ENCODE measurements at regions of chr1 and their contacts with region 1.

Region 1: DNA sequence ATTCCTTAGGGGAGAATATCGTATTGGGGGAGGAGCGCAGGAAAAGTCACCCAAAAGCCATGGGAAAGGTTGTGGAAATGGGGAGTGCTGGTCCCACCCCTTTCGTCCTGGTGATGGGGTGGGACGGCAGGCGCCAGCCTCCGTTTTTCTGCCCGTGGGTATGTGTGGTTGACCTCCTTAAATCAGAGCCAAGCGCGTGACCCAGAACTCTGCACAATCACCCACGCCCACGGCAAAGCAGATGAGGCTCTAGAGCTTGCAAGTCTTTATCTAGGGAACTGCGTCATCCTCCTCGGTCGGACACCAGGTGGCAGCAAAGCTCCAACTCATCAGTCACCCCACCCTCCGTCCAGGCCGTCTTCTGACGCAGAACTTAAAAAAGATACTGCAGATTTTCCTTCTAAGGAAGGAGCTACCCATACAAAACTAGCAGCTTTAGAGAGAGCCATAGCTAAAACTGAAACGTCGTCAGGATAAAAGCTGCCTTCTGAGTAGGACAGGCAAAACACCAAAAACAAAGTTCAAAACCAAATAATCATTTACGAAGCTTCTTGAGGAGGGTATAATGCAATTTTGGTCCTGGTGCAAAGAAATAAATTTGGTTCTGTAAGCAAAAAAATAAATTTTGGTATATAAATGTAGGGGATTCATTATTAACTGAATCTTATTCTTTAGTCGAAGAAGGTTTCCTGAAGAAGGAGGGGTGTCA is 62.0 kb downstream of the TBX19 start:
- DNase-seq: peak; percentile 66 to 90 (median 86)
- ATAC-seq: peak; percentile 100
- H3K4me3 ChIP-seq: peak overlapping the region; percentile 30
- H3K4me3 Mint-ChIP-seq: peak overlapping the region in 9 of 10 donors; percentile 5 to 66 (median 57)
- H3K27ac ChIP-seq: peak overlapping the region; percentile 12
- H3K27ac Mint-ChIP-seq: peak overlapping the region; percentile 80 to 96 (median 90)
- H3K4me1 ChIP-seq: peaks cover 0 to 33% of the 10 kb centered on the region in 2 donors
- H3K4me1 Mint-ChIP-seq: peaks cover 13 to 55% (median 31%) of the 10 kb centered on the region in 7 donors
- H3K27me3 ChIP-seq: no peaks in the 10 kb centered on the region
- H3K27me3 Mint-ChIP-seq: no peaks in the 10 kb centered on the region

Region 2: DNA sequence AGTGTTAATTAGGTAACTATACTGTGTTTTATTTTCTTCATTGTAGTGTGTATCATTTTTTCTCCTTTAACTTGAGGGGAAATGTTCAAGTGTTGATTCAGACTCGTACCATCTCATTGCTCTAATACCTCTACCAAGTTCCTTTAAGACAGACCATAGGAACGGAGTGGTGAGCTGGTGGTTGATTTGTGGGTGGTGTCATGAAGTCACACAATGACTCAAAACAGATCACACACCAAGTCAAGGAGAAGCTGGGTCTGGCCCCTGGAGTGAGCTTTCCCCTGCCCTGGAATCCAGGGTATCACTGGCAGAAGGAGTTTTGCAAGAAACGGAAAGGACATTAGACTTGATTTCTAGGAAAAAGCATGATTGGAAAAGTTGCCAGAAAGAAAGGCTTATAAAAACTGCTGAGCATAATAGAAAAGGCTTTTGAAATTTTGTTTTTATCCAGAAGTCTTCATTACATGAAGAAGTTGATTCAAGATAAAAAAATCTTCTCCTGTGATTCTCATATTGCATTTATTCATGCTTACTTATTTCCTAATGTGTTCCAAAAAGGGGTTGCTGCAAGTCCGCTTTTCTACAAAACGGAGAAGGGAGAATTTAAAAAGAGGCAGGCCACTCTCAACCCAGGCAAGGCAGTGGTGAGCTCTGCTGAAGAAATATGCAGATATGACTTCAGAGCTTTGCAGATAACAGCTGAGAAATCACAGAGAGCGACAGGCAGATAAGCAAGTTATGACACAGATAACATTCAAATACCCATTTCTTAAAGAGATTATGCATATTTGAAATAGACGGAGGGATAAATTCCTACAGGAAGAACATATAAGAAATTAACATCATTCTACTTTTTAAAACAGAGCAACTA is 17.7 kb after region 1 on chr1:
- CTCF ChIA-PET with region 1: interaction called, 68 read pairs
- POLR2A ChIA-PET with region 1: interaction called, 4 read pairs
- intact Hi-C with region 1: loop called (anchors 1 kb)
- DNase-seq: peak in 1 of 9 donors; percentile 51
- ATAC-seq: no peak
- H3K4me3 ChIP-seq: no peak overlapping the region
- H3K4me3 Mint-ChIP-seq: peak overlapping the region in 1 of 10 donors; percentile 49
- H3K27ac ChIP-seq: no peak overlapping the region
- H3K27ac Mint-ChIP-seq: peak overlapping the region in 2 of 9 donors; percentile 35 to 70
- H3K4me1 ChIP-seq: peaks cover 4 to 37% of the 10 kb centered on the region in 2 donors
- H3K4me1 Mint-ChIP-seq: peaks cover 8 to 45% (median 10%) of the 10 kb centered on the region in 7 donors
- H3K27me3 ChIP-seq: no peaks in the 10 kb centered on the region
- H3K27me3 Mint-ChIP-seq: peaks cover 0 to 12% (median 5%) of the 10 kb centered on the region in 5 donors

Region 3: DNA sequence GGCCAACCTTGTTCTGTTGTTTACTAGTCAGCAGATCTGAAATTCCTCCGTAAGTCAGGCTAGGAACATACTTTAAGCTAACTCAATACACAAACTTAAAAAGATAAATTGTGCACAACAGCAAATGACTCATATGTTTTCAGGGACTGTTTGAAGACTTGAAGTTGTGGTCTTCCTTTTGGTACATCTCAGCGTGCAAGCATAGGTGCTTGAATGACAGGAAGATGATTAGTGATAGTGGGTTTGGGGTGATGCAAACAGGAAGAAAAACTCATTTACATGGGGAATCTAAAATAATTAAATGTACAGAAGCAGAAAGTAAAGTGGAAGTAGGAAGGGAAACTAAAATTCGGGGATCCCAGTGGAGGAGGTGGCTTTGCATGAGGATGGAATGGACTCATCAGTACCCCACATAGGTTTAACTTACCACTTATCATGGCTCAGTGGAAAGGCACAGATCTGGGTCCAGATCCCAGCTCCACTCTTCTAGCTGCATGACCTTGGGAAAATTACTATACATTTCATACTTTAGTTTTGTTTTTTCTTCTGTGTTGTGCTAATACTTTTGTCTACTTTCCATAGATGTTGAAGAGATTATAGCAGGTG is 78.8 kb after region 1 on chr1:
- CTCF ChIA-PET with region 1: interaction called, 3 read pairs
- POLR2A ChIA-PET with region 1: no interaction called
- intact Hi-C with region 1: loop called in 1 of 2 experiments (anchors 5 kb)
- DNase-seq: no peak
- ATAC-seq: peak; percentile 81
- H3K4me3 ChIP-seq: no peak overlapping the region
- H3K4me3 Mint-ChIP-seq: peak overlapping the region in 2 of 10 donors; percentile 48 to 54
- H3K27ac ChIP-seq: no peak overlapping the region
- H3K27ac Mint-ChIP-seq: peak overlapping the region in 5 of 9 donors; percentile 14 to 75 (median 23)
- H3K4me1 ChIP-seq: peaks cover 0 to 38% of the 10 kb centered on the region in 2 donors
- H3K4me1 Mint-ChIP-seq: peaks cover 5 to 24% (median 7%) of the 10 kb centered on the region in 7 donors
- H3K27me3 ChIP-seq: no peaks in the 10 kb centered on the region
- H3K27me3 Mint-ChIP-seq: no peaks in the 10 kb centered on the region

Region 4: DNA sequence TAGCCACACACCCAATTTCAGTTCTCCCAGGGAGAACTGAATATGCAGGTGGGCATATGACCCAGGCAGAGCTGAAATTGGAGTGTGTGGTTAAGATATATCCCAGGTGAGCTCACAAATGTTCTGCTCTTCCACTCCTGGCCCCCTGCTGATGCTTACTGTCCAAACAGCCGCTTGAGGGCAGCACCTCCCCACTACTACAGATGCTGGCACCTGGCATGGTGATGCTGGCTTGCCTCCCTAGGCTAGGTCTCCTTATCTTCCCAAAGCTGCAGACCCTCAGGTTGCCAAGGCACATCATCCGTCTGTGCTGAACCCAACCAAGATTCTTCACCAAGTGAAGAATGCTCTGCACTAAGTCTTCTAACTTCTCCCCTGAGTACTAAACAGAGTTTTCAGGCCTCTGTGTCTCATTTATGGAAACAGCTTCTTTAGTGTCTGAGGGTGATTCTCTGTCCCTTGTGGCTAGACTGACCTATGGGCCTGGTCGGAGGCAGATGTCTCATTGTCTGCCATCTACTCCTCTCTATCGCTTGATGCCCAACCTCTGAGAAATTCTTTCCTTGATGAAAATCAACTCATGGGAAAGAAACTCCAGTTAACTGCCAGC is 260.9 kb after region 1 on chr1:
- CTCF ChIA-PET with region 1: interaction called, 12 read pairs
- POLR2A ChIA-PET with region 1: no interaction called
- intact Hi-C with region 1: loop called (anchors 1 to 10 kb)
- DNase-seq: peak; percentile 42 to 72 (median 58)
- ATAC-seq: peak; percentile 89
- H3K4me3 ChIP-seq: no peak overlapping the region
- H3K4me3 Mint-ChIP-seq: no peak overlapping the region
- H3K27ac ChIP-seq: no peak overlapping the region
- H3K27ac Mint-ChIP-seq: no peak overlapping the region
- H3K4me1 ChIP-seq: no peaks in the 10 kb centered on the region
- H3K4me1 Mint-ChIP-seq: peaks cover 0 to 7% (median 0%) of the 10 kb centered on the region in 7 donors
- H3K27me3 ChIP-seq: peaks cover 0 to 4% of the 10 kb centered on the region in 2 donors
- H3K27me3 Mint-ChIP-seq: peaks cover 0 to 30% (median 1%) of the 10 kb centered on the region in 5 donors

Region 5: DNA sequence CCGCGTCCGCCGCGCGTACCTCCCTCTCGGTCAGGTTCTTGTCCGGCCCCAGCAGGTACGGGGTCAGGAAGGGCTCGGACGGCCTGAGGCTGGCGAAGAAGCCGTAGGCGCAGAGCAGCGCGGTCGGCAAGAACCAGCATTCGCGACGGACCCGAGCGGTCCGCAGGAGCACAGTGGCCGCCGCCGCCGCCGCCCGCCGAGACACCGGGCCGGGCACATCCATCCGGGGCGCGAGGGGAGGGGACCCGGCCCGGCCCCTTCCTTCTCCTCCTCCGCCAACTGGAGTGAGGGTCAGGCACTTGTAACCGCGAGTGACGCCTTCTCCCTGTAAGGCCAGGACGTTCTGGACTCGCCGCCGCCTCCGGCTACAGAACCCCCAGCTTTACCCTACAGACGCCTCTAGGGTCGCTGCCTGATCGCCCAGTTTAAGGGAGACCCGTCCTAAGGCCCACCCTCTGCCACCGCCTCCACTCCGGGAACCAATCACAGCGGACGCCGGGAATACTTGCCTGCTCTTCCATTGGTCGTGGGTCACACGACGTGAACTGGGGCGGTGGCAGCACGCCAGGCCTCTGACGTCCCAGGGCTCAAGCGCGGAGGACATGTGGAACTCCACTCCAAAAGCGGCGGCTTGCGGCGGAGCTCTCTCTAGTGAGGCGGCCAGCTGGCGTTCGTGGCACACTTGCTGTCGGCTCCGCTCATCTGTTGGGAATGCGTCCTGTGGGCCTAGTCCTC is 1143.0 kb after region 1 on chr1 and contains the start of gene SLC19A2:
- CTCF ChIA-PET with region 1: no interaction called
- POLR2A ChIA-PET with region 1: no interaction called
- intact Hi-C with region 1: loop called in 1 of 2 experiments (anchors 2 kb)
- DNase-seq: peak; percentile 79 to 94 (median 89)
- ATAC-seq: peak; percentile 99
- H3K4me3 ChIP-seq: peak within 1 kb of the TSS; percentile 66
- H3K4me3 Mint-ChIP-seq: peak within 1 kb of the TSS; percentile 87 to 98 (median 94)
- H3K27ac ChIP-seq: peak within 1 kb of the TSS; percentile 81
- H3K27ac Mint-ChIP-seq: peak within 1 kb of the TSS; percentile 86 to 98 (median 94)
- H3K4me1 ChIP-seq: peaks cover 4 to 12% of the 10 kb centered on the region in 2 donors
- H3K4me1 Mint-ChIP-seq: peaks cover 35 to 56% (median 46%) of the 10 kb centered on the region in 7 donors
- H3K27me3 ChIP-seq: no peaks in the 10 kb centered on the region
- H3K27me3 Mint-ChIP-seq: peaks cover 0 to 8% (median 0%) of the 10 kb centered on the region in 5 donors
- total RNA-seq, gene SLC19A2: 3.7 to 5.9 (median 4.8) TPM

Measured in naive thymus-derived CD4-positive, alpha-beta T cell (primary cell).